Dorsolateral prefrontal cortex (tissue), 120 donors: ENCODE measurements at regions of chr22 and their contacts with region 1.

Region 1: GRCh38 chr22:37538590-37539357 is 19.6 kb upstream of the CARD10 start:
- DNase-seq: peak; percentile 73 to 95 (median 93)
- H3K4me3 ChIP-seq: peak overlapping the region in 34 of 59 donors; percentile 3 to 48 (median 28)
- H3K27ac ChIP-seq: peak overlapping the region in 14 of 59 donors; percentile 2 to 74 (median 45)
- H3K27me3 ChIP-seq: no peaks in the 10 kb centered on the region
- CTCF ChIP-seq: peak; percentile 73 to 99 (median 95)

Region 2: DNA sequence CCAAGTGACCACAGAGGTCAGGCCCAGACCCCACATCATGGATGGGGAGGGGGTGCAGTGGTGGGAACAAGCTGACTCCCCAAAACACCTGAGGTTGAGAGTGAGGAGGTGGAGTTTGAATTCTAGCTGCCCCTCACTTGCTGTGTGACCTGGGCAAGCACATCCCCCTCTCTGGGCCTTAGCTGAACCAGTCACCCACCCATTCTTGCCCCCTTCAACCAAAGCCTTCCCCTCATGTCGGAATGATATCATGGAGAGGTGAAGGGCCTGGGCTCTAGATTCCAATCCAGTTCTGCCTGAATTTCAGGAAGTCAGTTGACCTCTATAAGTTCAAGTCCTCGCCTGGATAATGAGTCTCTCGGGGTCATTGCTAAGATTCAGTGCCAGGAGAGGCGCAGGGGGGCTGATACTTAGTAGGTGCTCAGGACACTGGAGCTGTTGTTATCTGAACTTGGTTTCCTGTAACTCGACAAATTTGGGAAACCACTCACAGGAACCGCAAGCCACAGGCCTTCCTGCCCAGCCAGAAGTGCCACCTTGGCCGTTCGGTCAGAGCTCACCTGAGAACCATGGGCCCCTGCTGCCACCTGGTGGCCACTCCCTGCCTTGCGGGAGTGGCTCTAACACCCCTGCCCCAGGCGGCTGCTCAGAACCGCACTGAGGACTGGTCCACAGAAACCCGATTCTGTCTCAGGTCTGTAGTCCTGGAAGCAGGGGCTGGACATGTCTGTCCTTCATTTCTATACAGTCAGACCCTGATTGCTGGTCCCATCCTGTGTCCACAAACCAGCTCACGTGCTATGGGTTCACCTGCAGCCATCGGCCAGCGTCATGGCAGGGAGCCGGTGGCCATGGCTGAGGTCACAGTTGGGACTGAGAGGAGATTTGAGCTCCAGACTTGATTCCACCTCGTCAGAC is 28.4 kb after region 1 on chr22:
- intact Hi-C with region 1: loop called in 1 of 2 experiments (anchors 1 kb)
- DNase-seq: peak; percentile 73 to 85 (median 78)
- H3K4me3 ChIP-seq: peak overlapping the region in 19 of 59 donors; percentile 3 to 88 (median 33)
- H3K27ac ChIP-seq: peak overlapping the region; percentile 42 to 100 (median 98)
- H3K27me3 ChIP-seq: peaks cover 0 to 5% (median 0%) of the 10 kb centered on the region in 45 donors
- CTCF ChIP-seq: peak; percentile 76 to 98 (median 94)